ENCODE measurements at regions of chr3 and their contacts with region 1.

Region 1: GRCh38 chr3:47475570-47476329 is at the start of gene SCAP:
- DNase-seq: peak; percentile 95
- H3K4me3 ChIP-seq: peak within 1 kb of the TSS; percentile 83
- H3K27ac ChIP-seq: peak within 1 kb of the TSS; percentile 79
- H3K4me1 ChIP-seq: peaks cover 13% of the 10 kb centered on the region
- H3K27me3 ChIP-seq: no peaks in the 10 kb centered on the region
- CTCF ChIP-seq: peak; percentile 92
- total RNA-seq, gene SCAP: 86.5 to 137 TPM

Region 2: GRCh38 chr3:47420511-47421484 is 55.0 kb before region 1 on chr3:
- intact Hi-C with region 1: loop called (anchors 2 kb)
- DNase-seq: peak; percentile 96
- H3K4me3 ChIP-seq: no peak overlapping the region
- H3K27ac ChIP-seq: peak overlapping the region; percentile 74
- H3K4me1 ChIP-seq: peaks cover 21% of the 10 kb centered on the region
- H3K27me3 ChIP-seq: no peaks in the 10 kb centered on the region
- CTCF ChIP-seq: peak; percentile 86

Region 3: DNA sequence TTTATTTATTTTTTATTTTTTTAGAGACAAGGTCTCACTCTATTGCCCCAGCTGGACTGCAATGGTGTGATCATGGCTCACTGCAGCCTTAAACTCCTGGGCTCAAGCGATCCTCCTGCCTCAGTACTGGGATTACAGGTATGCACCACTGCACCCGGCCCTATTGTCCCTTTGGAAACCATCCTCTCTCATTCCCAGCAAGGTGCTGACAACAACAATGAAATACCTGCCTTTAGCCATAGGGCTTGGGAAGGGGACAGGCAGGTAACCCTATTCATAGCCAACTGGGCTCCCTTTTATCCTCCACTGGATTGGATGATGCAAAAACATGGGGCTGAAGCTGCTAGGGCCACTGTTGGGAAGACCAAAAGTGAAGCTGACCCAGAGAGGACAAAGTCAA is 43.1 kb before region 1 on chr3:
- intact Hi-C with region 1: no loop called
- DNase-seq: no peak
- H3K4me3 ChIP-seq: no peak overlapping the region
- H3K27ac ChIP-seq: no peak overlapping the region
- H3K4me1 ChIP-seq: peaks cover 7% of the 10 kb centered on the region
- H3K27me3 ChIP-seq: no peaks in the 10 kb centered on the region
- CTCF ChIP-seq: no peak

Region 4: DNA sequence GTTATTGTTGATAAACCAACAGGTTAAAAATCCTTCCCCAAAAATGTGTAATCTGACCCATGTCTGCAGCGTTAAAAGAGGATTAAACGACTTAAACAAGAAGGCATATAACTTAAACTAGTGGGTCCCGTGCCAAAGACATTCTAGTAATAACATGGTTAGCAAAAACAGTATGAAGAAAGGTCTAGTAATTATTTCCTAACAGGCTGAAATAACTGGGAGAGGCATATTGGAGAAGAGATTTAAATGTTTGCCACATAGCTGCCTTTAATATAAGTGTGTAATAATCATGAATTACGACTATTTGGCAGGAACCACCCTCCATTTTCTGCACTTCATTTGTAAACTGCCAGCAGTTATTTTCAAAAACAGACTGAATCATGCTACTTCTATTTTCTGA is 170.6 kb after region 1 on chr3:
- intact Hi-C with region 1: no loop called
- DNase-seq: no peak
- H3K4me3 ChIP-seq: no peak overlapping the region
- H3K27ac ChIP-seq: no peak overlapping the region
- H3K4me1 ChIP-seq: no peaks in the 10 kb centered on the region
- H3K27me3 ChIP-seq: no peaks in the 10 kb centered on the region
- CTCF ChIP-seq: no peak

Region 5: DNA sequence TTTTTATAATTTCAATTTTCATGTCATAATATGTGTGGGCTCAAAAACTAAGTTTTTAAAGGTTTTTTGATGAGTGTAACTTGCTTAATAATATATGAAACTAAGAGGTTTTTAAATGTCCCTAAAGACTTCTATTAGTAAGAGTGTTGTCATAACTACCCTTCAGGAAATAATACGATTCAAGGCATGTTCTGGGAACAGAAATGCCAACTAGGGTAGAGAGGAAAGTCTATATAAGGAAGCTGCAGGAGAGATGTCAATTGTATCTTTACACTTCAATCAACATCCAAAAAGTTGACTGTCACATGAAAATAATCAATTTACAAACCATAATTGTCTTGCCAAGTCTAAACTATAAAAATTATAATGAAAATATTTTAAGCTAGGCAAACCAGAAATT is 229.6 kb after region 1 on chr3:
- intact Hi-C with region 1: no loop called
- DNase-seq: no peak
- H3K4me3 ChIP-seq: no peak overlapping the region
- H3K27ac ChIP-seq: no peak overlapping the region
- H3K4me1 ChIP-seq: no peaks in the 10 kb centered on the region
- H3K27me3 ChIP-seq: no peaks in the 10 kb centered on the region
- CTCF ChIP-seq: no peak